Ovary (tissue), 10 donors: ENCODE measurements at regions of chr9 and their contacts with region 1.

Region 1: GRCh38 chr9:132411091-132411508 is 1.1 kb downstream of the CFAP77 start:
- DNase-seq: peak in 4 of 5 donors; percentile 25 to 54 (median 35)
- H3K4me3 ChIP-seq: no peak overlapping the region
- H3K27ac ChIP-seq: no peak overlapping the region
- H3K4me1 ChIP-seq: peaks cover 8% of the 10 kb centered on the region
- H3K27me3 ChIP-seq: no peaks in the 10 kb centered on the region
- CTCF ChIP-seq: peak in 1 of 3 donors; percentile 13
- EP300 ChIP-seq: no peak
- POLR2A ChIP-seq: no peak

Region 2: GRCh38 chr9:132201780-132202703 is 209.1 kb before region 1 on chr9:
- intact Hi-C with region 1: no loop called
- DNase-seq: no peak
- H3K4me3 ChIP-seq: no peak overlapping the region
- H3K27ac ChIP-seq: no peak overlapping the region
- H3K4me1 ChIP-seq: no peaks in the 10 kb centered on the region
- H3K27me3 ChIP-seq: no peaks in the 10 kb centered on the region
- CTCF ChIP-seq: no peak
- EP300 ChIP-seq: no peak
- POLR2A ChIP-seq: no peak

Region 3: GRCh38 chr9:132354637-132355355 is 56.3 kb before region 1 on chr9 and contains the start of gene SETX:
- intact Hi-C with region 1: loop called in 1 of 4 experiments (anchors 10 kb)
- DNase-seq: peak; percentile 96 to 99 (median 97)
- H3K4me3 ChIP-seq: peak within 1 kb of the TSS; percentile 91
- H3K27ac ChIP-seq: peak within 1 kb of the TSS in 1 of 2 donors; percentile 76
- H3K4me1 ChIP-seq: peaks cover 7% of the 10 kb centered on the region
- H3K27me3 ChIP-seq: no peaks in the 10 kb centered on the region
- CTCF ChIP-seq: peak in 1 of 3 donors; percentile 27
- EP300 ChIP-seq: peak; percentile 66
- POLR2A ChIP-seq: peak; percentile 77
- total RNA-seq, gene SETX: 31.8 to 51.9 (median 42.5) TPM

Region 4: GRCh38 chr9:132973713-132974112 is 562.6 kb after region 1 on chr9:
- intact Hi-C with region 1: loop called in 1 of 4 experiments (anchors 10 kb)
- DNase-seq: no peak
- H3K4me3 ChIP-seq: no peak overlapping the region
- H3K27ac ChIP-seq: no peak overlapping the region
- H3K4me1 ChIP-seq: peaks cover 4% of the 10 kb centered on the region
- H3K27me3 ChIP-seq: no peaks in the 10 kb centered on the region
- CTCF ChIP-seq: no peak
- EP300 ChIP-seq: no peak
- POLR2A ChIP-seq: no peak